AG04450 (cell line): ENCODE measurements at regions of chr12 and their contacts with region 1.

Region 1: GRCh38 chr12:105107494-105108371 is at the start of gene WASHC4:
- DNase-seq: peak; percentile 47
- H3K4me3 ChIP-seq: peak within 1 kb of the TSS; percentile 88
- H3K27ac ChIP-seq: peak within 1 kb of the TSS; percentile 81
- H3K27me3 ChIP-seq: no peaks in the 10 kb centered on the region
- CTCF ChIP-seq: no peak
- polyA plus RNA-seq, gene WASHC4: 33.8 and 59.4 TPM in 2 replicates

Region 2: DNA sequence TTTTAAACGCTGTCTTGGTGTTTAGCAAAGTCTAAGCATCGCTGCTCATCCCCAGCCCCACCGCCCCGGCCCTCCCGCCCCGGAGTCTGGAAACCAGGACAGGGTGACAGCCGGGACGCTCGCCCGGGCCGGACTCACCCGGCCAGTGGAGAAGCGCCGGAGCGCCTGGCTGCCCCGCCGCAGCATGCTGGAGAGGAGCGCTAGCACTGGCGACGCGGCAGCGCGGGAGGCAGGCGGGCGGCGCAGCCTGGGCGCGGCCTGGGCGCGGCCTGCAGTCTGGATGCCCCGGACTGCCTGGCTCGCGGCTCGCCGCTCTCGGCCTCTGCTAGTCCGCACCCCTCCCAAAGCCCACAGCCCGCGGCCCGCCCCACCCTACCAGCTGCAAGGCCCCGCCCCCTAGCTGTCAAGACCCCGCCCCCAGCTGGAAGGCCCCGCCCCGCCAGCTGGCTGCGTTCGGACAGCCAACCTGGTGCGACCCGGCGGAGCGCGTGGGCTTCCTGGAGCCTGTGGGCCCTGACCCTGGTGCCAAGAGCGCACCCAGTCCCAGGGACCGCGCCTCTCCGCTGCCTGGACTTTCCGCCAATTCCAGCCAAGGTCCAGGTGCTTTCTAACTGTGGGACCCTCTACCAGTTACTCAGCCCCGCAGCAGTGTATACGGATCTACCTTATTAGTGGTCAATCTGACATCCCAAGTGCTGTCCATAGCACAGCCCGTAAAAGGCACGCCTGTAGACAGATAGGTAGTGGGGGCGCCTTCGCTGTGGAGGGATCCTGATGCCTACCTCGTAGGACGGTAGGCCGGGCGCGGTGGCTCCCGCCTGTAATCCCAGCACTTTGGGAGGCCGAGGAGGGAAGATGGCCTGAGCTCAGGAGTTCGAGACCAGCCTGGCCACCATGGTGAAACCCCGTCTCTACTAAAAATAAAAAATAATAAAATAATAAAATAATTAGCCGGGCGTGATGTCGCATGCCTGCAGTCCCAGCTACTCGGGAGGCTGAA is 23.2 kb before region 1 on chr12 and contains the start of gene ALDH1L2:
- CTCF ChIA-PET with region 1: no interaction called
- POLR2A ChIA-PET with region 1: interaction called, 28 read pairs
- DNase-seq: peak; percentile 72
- H3K4me3 ChIP-seq: peak within 1 kb of the TSS; percentile 97
- H3K27ac ChIP-seq: peak within 1 kb of the TSS; percentile 82
- H3K27me3 ChIP-seq: no peaks in the 10 kb centered on the region
- CTCF ChIP-seq: no peak
- polyA plus RNA-seq, gene ALDH1L2: 90.5 and 116 TPM in 2 replicates